CD8-positive, alpha-beta T cell (primary cell): ENCODE measurements at regions of chr5 and their contacts with region 1.

Region 1: DNA sequence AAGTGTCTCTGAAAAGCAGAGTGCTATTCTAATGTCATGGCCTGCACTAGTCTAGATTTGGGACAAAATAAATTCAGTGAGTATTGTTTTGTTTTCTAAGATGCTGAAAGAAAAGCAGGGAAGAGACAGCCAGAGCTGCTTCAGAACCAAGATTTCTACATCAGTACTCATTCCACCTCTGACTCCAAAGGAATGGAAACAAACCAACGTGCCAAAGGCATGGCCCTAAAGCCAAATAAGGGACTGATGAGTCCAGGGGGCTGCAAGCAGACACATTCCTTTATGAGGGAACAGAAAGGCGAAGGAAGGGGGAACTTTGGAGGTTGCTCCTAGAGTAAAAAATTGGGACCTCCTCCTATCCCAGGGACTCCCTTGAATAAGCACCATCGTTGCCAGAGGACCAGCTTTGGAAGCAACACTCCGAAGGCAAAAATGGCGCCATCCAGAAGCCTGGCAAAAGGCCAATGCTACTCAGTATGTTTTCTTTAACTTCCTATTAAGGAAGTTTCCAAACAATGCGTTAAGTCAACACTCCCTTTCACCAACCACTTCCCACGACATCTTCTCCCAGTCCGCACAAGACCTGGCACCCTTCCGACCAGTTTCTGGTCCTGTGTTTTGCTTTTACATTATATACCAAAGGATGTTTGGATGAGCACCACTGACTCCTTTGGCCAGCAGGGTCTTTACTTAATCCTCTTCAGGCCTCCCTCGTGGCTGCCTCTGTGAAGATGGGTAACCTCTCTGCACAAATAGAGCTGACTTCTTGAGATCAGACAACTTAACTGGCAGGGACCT is 31.6 kb downstream of the ADAM19 start:
- DNase-seq: no peak
- ATAC-seq: peak; percentile 8
- H3K4me3 ChIP-seq: no peak overlapping the region
- H3K4me3 Mint-ChIP-seq: peak overlapping the region; percentile 26
- H3K27ac ChIP-seq: peak overlapping the region in 1 of 2 experiments; percentile 12
- H3K27ac Mint-ChIP-seq: peak overlapping the region; percentile 73
- H3K4me1 ChIP-seq: no peaks in the 10 kb centered on the region
- H3K4me1 Mint-ChIP-seq: peaks cover 52% of the 10 kb centered on the region
- H3K27me3 ChIP-seq: no peaks in the 10 kb centered on the region
- H3K27me3 Mint-ChIP-seq: no peaks in the 10 kb centered on the region
- CTCF ChIP-seq: no peak

Region 2: DNA sequence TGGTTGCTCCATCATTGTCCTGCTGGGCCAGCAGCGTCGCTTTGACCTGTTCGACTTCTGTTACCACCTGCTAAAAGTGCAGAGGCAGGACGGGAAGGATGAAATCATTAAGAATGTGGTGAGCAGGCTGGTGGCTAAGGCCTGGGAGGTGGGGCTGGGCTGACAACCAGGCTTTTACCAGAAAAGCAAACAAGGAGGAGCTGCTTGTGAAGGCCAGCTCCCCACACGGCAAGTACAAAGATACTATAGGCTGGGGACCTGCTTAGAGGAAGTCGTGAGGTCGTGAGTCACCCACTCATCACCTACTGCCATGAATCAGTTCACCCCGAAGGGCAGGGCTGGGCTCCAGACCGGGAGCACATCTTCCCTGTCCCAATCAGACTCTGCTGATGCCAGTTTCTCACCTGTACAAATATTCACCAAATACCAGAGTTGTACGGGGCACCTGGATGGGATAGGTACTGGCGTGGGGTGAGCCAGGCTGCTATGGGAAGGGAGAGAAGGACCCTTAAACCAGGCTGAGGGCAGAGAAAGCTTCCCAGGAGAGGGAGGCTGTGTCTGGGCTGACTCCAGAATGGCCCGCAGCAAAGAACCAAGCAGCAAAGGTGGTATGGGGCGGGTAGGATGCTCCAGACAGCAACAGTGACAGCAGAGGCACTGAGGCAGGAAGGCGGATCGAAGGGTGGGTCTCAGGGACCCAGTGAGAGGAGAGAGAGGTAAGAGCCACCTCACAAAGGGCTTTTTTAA is 153.3 kb before region 1 on chr5:
- CTCF ChIA-PET with region 1: no interaction called
- POLR2A ChIA-PET with region 1: no interaction called
- intact Hi-C with region 1: no loop called
- DNase-seq: peak in 7 of 9 experiments; percentile 12 to 75 (median 47)
- ATAC-seq: peak; percentile 84
- H3K4me3 ChIP-seq: no peak overlapping the region
- H3K4me3 Mint-ChIP-seq: no peak overlapping the region
- H3K27ac ChIP-seq: peak overlapping the region in 1 of 2 experiments; percentile 70
- H3K27ac Mint-ChIP-seq: peak overlapping the region; percentile 91
- H3K4me1 ChIP-seq: no peaks in the 10 kb centered on the region
- H3K4me1 Mint-ChIP-seq: peaks cover 9% of the 10 kb centered on the region
- H3K27me3 ChIP-seq: no peaks in the 10 kb centered on the region
- H3K27me3 Mint-ChIP-seq: no peaks in the 10 kb centered on the region
- CTCF ChIP-seq: no peak

Region 3: DNA sequence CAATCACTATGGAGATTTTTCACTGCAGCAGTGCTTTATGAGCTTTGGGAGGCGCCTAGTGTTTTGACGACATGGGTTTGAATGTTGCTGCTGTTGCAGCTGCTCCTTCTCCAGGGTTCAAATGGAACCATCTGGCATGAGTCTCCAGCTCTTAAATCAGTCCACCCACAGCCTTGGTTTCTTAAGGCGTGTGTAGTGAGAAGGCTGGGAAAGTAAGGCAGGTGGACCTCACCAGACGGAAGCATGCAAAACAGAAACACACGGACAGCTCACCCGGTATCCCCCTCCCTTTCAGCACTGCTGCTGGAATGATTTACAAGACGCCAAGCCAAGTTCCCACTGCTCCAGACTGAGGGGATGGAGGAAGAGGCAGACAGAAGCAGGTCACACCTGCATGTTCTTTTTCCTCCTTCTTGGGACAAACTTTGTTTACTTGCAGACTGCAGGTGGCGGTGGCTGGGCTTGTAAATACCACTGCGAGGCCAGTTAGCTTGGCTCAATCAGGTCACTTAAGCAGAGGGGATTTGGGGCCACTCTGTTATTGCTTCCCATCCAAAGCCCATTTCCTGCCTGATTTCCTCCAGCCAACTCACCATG is 15.9 kb before region 1 on chr5:
- CTCF ChIA-PET with region 1: no interaction called
- POLR2A ChIA-PET with region 1: no interaction called
- intact Hi-C with region 1: no loop called
- DNase-seq: no peak
- ATAC-seq: no peak
- H3K4me3 ChIP-seq: no peak overlapping the region
- H3K4me3 Mint-ChIP-seq: no peak overlapping the region
- H3K27ac ChIP-seq: no peak overlapping the region
- H3K27ac Mint-ChIP-seq: no peak overlapping the region
- H3K4me1 ChIP-seq: no peaks in the 10 kb centered on the region
- H3K4me1 Mint-ChIP-seq: peaks cover 1% of the 10 kb centered on the region
- H3K27me3 ChIP-seq: no peaks in the 10 kb centered on the region
- H3K27me3 Mint-ChIP-seq: no peaks in the 10 kb centered on the region
- CTCF ChIP-seq: no peak

Region 4: DNA sequence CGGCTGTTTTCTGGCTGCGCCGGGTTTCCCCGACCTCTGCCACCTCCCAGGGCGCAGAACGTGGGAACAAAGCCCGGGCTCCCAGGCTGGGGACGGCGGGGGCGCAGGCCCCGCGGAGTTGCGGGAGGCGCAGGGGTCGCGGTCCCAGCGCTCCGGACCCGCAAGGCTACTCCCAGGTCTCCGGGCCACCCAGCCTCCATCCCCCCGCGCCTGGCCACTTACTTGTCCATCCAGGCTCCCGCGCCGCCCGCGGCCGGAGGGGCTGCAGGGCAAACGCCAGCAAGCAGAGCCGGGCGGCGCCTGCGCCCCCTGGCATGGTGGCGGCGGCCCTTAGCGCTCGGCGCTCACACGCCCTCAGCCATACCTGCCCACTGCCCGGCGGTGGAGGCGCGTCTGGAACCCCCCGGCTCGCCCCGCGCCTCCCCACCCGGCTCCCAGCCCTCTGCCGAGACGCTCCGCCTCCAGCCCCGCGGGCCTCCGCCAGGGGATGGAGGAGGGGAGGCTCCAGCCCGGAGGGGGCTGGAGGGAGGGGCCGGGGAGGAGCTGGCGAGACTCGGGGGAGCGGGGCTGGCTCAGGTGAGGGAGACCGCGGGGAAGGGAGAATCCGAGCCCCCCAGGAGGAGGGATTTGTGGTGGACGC is 31.5 kb after region 1 on chr5 and contains the start of gene ADAM19:
- CTCF ChIA-PET with region 1: no interaction called
- POLR2A ChIA-PET with region 1: no interaction called
- intact Hi-C with region 1: loop called in 1 of 2 experiments (anchors 1 kb)
- DNase-seq: peak in 5 of 9 experiments; percentile 23 to 53 (median 42)
- ATAC-seq: peak; percentile 74
- H3K4me3 ChIP-seq: peak within 1 kb of the TSS; percentile 54 to 56
- H3K4me3 Mint-ChIP-seq: peak within 1 kb of the TSS; percentile 91
- H3K27ac ChIP-seq: no peak within 1 kb of the TSS
- H3K27ac Mint-ChIP-seq: peak within 1 kb of the TSS; percentile 58
- H3K4me1 ChIP-seq: no peaks in the 10 kb centered on the region
- H3K4me1 Mint-ChIP-seq: peaks cover 24% of the 10 kb centered on the region
- H3K27me3 ChIP-seq: peaks cover 8 to 10% of the 10 kb centered on the region in 2 experiments
- H3K27me3 Mint-ChIP-seq: peaks cover 10% of the 10 kb centered on the region
- CTCF ChIP-seq: no peak
- total RNA-seq, gene ADAM19: 5.9 to 6.5 TPM

Region 5: GRCh38 chr5:157820593-157821252 is 276.7 kb after region 1 on chr5:
- CTCF ChIA-PET with region 1: no interaction called
- POLR2A ChIA-PET with region 1: no interaction called
- intact Hi-C with region 1: no loop called
- DNase-seq: peak in 3 of 9 experiments; percentile 15 to 62 (median 48)
- ATAC-seq: no peak
- H3K4me3 ChIP-seq: no peak overlapping the region
- H3K4me3 Mint-ChIP-seq: no peak overlapping the region
- H3K27ac ChIP-seq: no peak overlapping the region
- H3K27ac Mint-ChIP-seq: no peak overlapping the region
- H3K4me1 ChIP-seq: no peaks in the 10 kb centered on the region
- H3K4me1 Mint-ChIP-seq: peaks cover 34% of the 10 kb centered on the region
- H3K27me3 ChIP-seq: no peaks in the 10 kb centered on the region
- H3K27me3 Mint-ChIP-seq: no peaks in the 10 kb centered on the region
- CTCF ChIP-seq: peak; percentile 26

Region 6: GRCh38 chr5:157870837-157871834 is 327.1 kb after region 1 on chr5:
- CTCF ChIA-PET with region 1: no interaction called
- POLR2A ChIA-PET with region 1: no interaction called
- intact Hi-C with region 1: no loop called
- DNase-seq: no peak
- ATAC-seq: no peak
- H3K4me3 ChIP-seq: no peak overlapping the region
- H3K4me3 Mint-ChIP-seq: no peak overlapping the region
- H3K27ac ChIP-seq: no peak overlapping the region
- H3K27ac Mint-ChIP-seq: no peak overlapping the region
- H3K4me1 ChIP-seq: no peaks in the 10 kb centered on the region
- H3K4me1 Mint-ChIP-seq: no peaks in the 10 kb centered on the region
- H3K27me3 ChIP-seq: no peaks in the 10 kb centered on the region
- H3K27me3 Mint-ChIP-seq: no peaks in the 10 kb centered on the region
- CTCF ChIP-seq: no peak